Left cardiac atrium (tissue), 4 donors: ENCODE measurements at regions of chr5 and their contacts with region 1.

Region 1: GRCh38 chr5:82459626-82460025 is 181.5 kb upstream of the RPS23 start:
- DNase-seq: no peak
- ATAC-seq: no peak

Region 2: GRCh38 chr5:82480331-82480730 is 20.7 kb after region 1 on chr5:
- intact Hi-C with region 1: loop called in 1 of 2 experiments (anchors 1 kb)
- DNase-seq: no peak
- ATAC-seq: no peak

Region 3: DNA sequence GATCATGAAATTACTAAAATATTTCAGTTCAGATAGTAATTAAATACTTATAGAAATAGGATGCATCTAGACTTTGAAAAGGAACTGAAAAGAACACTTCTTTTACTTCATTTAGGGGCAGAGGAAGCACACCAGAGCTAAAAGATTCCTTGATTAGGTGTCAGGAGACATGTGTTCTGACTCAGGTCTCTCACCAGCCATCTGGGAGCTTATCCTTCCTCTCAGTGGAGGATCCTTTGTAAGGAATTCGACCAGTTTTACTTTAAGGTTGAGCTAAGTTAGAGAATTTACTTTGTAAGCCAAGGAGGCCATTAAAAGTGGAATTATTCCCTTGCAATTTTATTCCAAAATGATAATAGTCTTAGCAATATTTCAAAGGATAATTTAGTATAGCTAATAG is 1028.6 kb after region 1 on chr5:
- intact Hi-C with region 1: no loop called
- DNase-seq: no peak
- ATAC-seq: no peak